Left ventricle myocardium superior (tissue), 1 donor: ENCODE measurements at regions of chr10 and their contacts with region 1.

Region 1: DNA sequence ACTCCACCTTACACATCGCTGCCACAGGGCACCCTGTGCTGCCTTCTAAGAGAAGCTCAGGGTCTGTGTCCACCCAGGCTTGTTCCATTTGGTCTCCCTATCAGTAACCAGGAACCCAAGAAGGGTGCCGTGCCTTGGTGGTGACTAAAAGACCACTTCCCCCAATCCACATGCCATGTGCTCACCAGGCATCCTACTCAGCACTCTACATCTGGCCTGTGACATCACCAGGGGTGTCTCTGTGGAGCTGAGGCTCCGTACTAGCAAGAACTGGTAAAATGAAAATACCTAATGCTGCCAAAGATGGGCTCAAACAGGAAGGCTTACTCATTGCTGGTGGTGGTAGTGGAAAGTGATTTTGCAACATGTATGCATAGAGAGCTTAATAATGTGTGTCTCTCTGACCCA is 19.0 kb upstream of the C10orf71 start:
- DNase-seq: no peak
- ATAC-seq: no peak

Region 2: GRCh38 chr10:49237985-49238384 is 42.0 kb before region 1 on chr10:
- intact Hi-C with region 1: loop called (anchors 10 kb)
- DNase-seq: no peak
- ATAC-seq: no peak